WTC11 (cell line): ENCODE measurements at regions of chr9 and their contacts with region 1.

Region 1: DNA sequence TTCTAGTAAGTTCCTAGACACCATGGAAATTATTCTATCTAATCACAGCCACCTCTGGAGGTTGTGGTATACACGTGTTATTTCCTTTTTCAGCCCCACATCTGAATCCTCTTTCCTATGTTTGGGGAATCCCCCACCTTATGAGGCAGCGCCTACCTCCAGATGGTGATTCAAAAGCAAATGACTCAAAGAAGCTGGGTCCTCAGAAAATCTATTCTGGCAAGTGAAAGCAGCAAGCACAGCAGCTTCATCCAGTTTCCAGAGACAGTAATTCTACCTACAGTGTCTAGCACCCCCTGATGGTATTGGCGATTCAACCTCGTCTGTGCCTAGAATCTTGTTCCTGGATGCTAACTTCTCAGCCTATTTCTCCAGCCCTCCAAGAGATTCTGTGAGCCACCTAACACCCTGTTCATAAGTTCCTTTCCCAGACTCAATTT is 43.0 kb downstream of the STRBP start:
- DNase-seq: peak; percentile 47
- ATAC-seq: peak; percentile 94
- H3K4me3 Mint-ChIP-seq: no peak overlapping the region
- H3K27ac Mint-ChIP-seq: 0 out of 2 replicates have a peak overlapping the region, but pooled peaks have one; percentile 55
- H3K4me1 Mint-ChIP-seq: peaks cover 37% of the 10 kb centered on the region
- H3K27me3 Mint-ChIP-seq: no peaks in the 10 kb centered on the region
- CTCF ChIP-seq: no peak

Region 2: DNA sequence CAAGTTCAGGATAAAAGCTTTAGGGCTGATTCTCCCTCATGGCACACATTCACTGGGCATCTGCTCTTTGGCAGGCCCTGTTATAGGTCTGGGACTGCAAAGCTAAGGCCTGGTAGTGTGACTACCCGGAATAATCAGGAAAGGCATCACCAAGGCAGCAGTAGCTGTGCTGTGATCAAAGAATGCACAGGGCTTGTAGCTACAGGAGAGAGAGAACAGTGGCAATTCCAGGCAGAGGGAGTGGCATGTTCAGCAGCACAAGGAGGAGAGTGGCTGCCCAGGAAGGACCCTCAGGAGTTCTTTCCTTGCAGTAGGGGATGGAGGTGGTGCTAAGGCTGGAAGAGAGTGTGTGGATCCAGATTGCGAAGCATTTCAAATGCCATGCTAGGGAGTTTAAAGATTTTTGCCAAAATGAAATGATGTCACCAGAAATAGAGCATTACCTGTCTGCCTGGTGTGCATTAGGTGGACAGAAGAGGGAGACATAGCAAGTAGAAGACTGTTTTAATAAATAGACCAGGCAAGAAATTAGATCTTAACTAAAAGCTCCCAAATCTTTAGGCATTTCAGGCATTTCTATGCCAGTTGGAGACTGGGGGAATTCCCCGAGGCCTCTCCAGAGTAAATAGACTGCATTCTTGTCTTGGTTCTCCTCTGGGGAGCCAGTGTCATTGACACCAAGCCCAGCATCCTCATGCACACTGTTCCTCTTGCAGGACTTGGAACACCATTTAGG is 122.9 kb before region 1 on chr9:
- CTCF ChIA-PET with region 1: interaction called, 16 read pairs
- POLR2A ChIA-PET with region 1: no interaction called
- DNase-seq: no peak
- ATAC-seq: peak; percentile 21
- H3K4me3 Mint-ChIP-seq: no peak overlapping the region
- H3K27ac Mint-ChIP-seq: peak overlapping the region; percentile 55
- H3K4me1 Mint-ChIP-seq: peaks cover 29% of the 10 kb centered on the region
- H3K27me3 Mint-ChIP-seq: no peaks in the 10 kb centered on the region
- CTCF ChIP-seq: no peak

Region 3: DNA sequence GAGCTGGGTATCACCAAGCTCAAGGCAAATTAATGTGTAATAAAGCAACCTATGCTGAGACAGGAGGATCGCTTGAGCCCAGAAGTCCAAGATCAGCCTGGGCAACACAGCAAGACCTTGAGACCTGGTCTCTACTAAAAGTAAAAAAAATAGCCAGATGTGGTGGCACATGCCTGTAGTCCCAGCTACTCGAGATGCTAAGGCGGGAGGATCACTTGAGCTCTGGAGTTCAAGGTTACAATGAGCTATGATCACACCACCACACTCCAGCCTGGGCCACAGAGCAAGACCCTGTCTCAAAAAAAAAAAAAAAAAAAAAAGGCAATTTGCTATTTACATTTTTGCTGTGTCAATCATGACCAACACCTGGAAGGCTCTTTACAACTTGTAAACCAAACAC is 37.8 kb after region 1 on chr9:
- CTCF ChIA-PET with region 1: interaction called, 10 read pairs
- POLR2A ChIA-PET with region 1: interaction called, 9 read pairs
- DNase-seq: no peak
- ATAC-seq: no peak
- H3K4me3 Mint-ChIP-seq: no peak overlapping the region
- H3K27ac Mint-ChIP-seq: no peak overlapping the region; the same call in 1 of the 2 replicates
- H3K4me1 Mint-ChIP-seq: peaks cover 50% of the 10 kb centered on the region
- H3K27me3 Mint-ChIP-seq: no peaks in the 10 kb centered on the region
- CTCF ChIP-seq: no peak